CD4-positive, alpha-beta T cell (primary cell): ENCODE measurements at regions of chr14 and their contacts with region 1.

Region 1: GRCh38 chr14:75293920-75294642 is 15.5 kb downstream of the FOS start:
- DNase-seq: peak; percentile 88 to 98 (median 94)
- ATAC-seq: peak; percentile 84
- H3K4me3 ChIP-seq: peak overlapping the region; percentile 65
- H3K4me3 Mint-ChIP-seq: peak overlapping the region; percentile 94
- H3K27ac ChIP-seq: peak overlapping the region; percentile 80 to 95
- H3K27ac Mint-ChIP-seq: peak overlapping the region; percentile 85
- H3K4me1 ChIP-seq: peaks cover 32% of the 10 kb centered on the region
- H3K4me1 Mint-ChIP-seq: peaks cover 21% of the 10 kb centered on the region
- H3K27me3 ChIP-seq: no peaks in the 10 kb centered on the region
- H3K27me3 Mint-ChIP-seq: peaks cover 4% of the 10 kb centered on the region
- CTCF ChIP-seq: no peak

Region 2: GRCh38 chr14:74249433-74250375 is 1044.4 kb before region 1 on chr14:
- CTCF ChIA-PET with region 1: no interaction called
- POLR2A ChIA-PET with region 1: no interaction called
- intact Hi-C with region 1: no loop called
- DNase-seq: no peak
- ATAC-seq: no peak
- H3K4me3 ChIP-seq: no peak overlapping the region
- H3K4me3 Mint-ChIP-seq: no peak overlapping the region
- H3K27ac ChIP-seq: no peak overlapping the region
- H3K27ac Mint-ChIP-seq: no peak overlapping the region
- H3K4me1 ChIP-seq: peaks cover 9% of the 10 kb centered on the region
- H3K4me1 Mint-ChIP-seq: peaks cover 9% of the 10 kb centered on the region
- H3K27me3 ChIP-seq: peaks cover 26 to 39% of the 10 kb centered on the region in 2 experiments
- H3K27me3 Mint-ChIP-seq: peaks cover 57% of the 10 kb centered on the region
- CTCF ChIP-seq: no peak

Region 3: DNA sequence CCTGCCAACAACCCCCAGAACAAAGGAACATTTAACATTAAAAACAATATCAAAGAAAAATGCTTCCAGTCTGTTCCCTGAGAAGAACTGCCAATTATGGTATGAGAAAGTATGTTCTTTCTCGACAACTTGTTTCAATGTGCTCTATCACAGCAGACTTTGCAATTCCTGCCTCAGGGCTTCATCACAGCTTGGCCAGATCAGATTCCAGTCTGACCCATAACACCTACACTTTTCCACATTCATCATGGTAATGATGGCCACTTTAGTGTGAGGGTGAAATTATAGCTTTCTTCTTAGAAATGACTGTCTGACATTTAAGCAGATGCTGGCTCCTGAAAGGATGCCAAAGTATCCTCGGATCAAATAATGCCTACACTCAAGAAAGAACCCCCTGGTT is 184.2 kb before region 1 on chr14:
- CTCF ChIA-PET with region 1: no interaction called
- POLR2A ChIA-PET with region 1: no interaction called
- intact Hi-C with region 1: no loop called
- DNase-seq: no peak
- ATAC-seq: no peak
- H3K4me3 ChIP-seq: no peak overlapping the region
- H3K4me3 Mint-ChIP-seq: no peak overlapping the region
- H3K27ac ChIP-seq: no peak overlapping the region
- H3K27ac Mint-ChIP-seq: peak overlapping the region; percentile 7
- H3K4me1 ChIP-seq: peaks cover 3% of the 10 kb centered on the region
- H3K4me1 Mint-ChIP-seq: peaks cover 11% of the 10 kb centered on the region
- H3K27me3 ChIP-seq: no peaks in the 10 kb centered on the region
- H3K27me3 Mint-ChIP-seq: no peaks in the 10 kb centered on the region
- CTCF ChIP-seq: no peak

Region 4: GRCh38 chr14:75141967-75142366 is 152.1 kb before region 1 on chr14:
- CTCF ChIA-PET with region 1: interaction called, 9 read pairs
- POLR2A ChIA-PET with region 1: interaction called, 5 read pairs
- intact Hi-C with region 1: loop called in 1 of 2 experiments (anchors 1 kb)
- DNase-seq: peak in 7 of 14 experiments; percentile 8 to 73 (median 47)
- ATAC-seq: peak; percentile 69
- H3K4me3 ChIP-seq: no peak overlapping the region
- H3K4me3 Mint-ChIP-seq: no peak overlapping the region
- H3K27ac ChIP-seq: no peak overlapping the region
- H3K27ac Mint-ChIP-seq: peak overlapping the region; percentile 63
- H3K4me1 ChIP-seq: peaks cover 25% of the 10 kb centered on the region
- H3K4me1 Mint-ChIP-seq: peaks cover 74% of the 10 kb centered on the region
- H3K27me3 ChIP-seq: no peaks in the 10 kb centered on the region
- H3K27me3 Mint-ChIP-seq: no peaks in the 10 kb centered on the region
- CTCF ChIP-seq: peak; percentile 51

Region 5: DNA sequence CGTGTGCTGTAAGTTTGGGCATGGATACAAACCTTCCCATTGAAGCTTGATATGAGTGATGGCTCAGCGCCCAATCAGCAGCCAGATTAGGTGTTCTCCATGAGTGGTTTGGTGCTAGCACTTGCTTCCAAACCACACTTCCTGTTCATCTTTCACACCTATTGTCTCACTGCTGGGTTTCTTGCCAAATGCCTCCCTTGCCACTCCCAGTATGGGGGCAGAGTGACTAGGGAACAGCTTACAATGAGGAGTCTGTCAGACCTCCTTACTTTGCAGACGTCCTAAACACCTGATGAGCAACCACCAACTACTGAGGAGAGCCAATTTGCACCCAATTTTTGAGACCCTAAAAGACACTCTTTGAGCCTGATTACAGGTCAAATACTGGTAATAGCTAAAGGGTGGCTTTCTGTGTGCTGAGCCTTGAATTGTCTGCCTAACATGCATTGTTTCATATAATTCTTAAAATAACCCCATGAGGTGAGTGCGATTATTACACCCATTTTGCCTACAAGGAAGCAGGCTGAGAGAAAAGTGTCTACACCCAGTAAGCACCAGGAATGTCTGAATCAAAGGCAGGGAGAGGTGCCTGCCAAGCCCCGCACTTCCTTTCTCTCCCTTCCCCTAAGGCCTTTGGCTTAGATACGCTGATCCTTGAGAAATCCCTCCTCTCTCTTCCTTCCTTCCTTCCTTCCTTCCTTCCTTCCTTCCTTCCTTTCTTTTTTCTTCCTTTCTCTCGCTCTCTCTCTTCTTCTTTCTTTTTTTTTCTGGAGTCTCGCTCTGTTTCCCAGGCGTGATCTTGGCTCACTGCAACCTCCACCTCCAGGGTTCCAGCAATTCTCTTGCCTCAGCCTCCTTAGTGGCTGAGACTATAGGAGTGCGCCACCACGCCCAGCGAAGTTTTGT is 63.7 kb before region 1 on chr14:
- CTCF ChIA-PET with region 1: interaction called, 32 read pairs
- POLR2A ChIA-PET with region 1: interaction called, 21 read pairs
- intact Hi-C with region 1: loop called (anchors 1 kb)
- DNase-seq: peak; percentile 19 to 89 (median 38)
- ATAC-seq: peak; percentile 62
- H3K4me3 ChIP-seq: no peak overlapping the region
- H3K4me3 Mint-ChIP-seq: peak overlapping the region; percentile 46
- H3K27ac ChIP-seq: peak overlapping the region in 1 of 2 donors; percentile 55
- H3K27ac Mint-ChIP-seq: peak overlapping the region; percentile 75
- H3K4me1 ChIP-seq: peaks cover 58% of the 10 kb centered on the region
- H3K4me1 Mint-ChIP-seq: peaks cover 71% of the 10 kb centered on the region
- H3K27me3 ChIP-seq: no peaks in the 10 kb centered on the region
- H3K27me3 Mint-ChIP-seq: no peaks in the 10 kb centered on the region
- CTCF ChIP-seq: peak; percentile 20

Region 6: DNA sequence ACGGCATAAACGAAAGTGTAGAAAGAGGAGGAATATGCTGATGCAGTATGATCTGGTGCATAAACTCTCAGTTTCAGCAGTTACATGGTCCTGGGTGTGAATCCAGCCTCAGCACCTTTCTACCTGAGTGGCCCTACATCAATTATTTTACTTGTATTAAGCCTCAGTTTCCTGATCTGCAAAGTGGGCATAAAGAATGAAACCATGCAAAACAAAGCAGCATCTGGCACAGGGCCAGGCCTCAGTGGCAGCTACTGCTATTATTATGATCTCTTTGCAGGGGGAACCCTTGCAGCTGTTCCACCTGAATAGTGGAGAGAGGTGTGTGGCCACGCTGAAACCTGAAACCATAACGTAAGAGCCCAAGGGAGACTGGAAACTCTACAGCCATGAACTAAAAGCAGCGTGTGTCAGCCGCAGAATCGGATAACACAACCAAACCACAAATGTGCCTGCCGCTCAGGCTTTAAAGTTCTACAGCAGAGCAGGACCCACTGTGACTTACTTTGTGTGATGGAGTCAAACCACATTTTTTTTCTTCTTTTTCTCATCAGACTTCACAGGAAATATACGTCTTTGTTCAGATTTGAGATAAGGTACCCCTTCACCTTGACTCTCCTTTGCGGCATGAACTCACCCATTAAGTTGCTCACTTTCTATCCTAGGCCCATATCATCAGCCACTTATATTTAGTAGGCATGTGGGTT is 44.7 kb before region 1 on chr14:
- CTCF ChIA-PET with region 1: interaction called, 6 read pairs
- POLR2A ChIA-PET with region 1: interaction called, 23 read pairs
- intact Hi-C with region 1: loop called in 1 of 2 experiments (anchors 1 kb)
- DNase-seq: peak; percentile 67 to 97 (median 76)
- ATAC-seq: peak; percentile 72
- H3K4me3 ChIP-seq: peak overlapping the region; percentile 19
- H3K4me3 Mint-ChIP-seq: peak overlapping the region; percentile 50
- H3K27ac ChIP-seq: peak overlapping the region; percentile 75 to 78
- H3K27ac Mint-ChIP-seq: peak overlapping the region; percentile 87
- H3K4me1 ChIP-seq: peaks cover 68% of the 10 kb centered on the region
- H3K4me1 Mint-ChIP-seq: peaks cover 75% of the 10 kb centered on the region
- H3K27me3 ChIP-seq: no peaks in the 10 kb centered on the region
- H3K27me3 Mint-ChIP-seq: no peaks in the 10 kb centered on the region
- CTCF ChIP-seq: no peak

Region 7: DNA sequence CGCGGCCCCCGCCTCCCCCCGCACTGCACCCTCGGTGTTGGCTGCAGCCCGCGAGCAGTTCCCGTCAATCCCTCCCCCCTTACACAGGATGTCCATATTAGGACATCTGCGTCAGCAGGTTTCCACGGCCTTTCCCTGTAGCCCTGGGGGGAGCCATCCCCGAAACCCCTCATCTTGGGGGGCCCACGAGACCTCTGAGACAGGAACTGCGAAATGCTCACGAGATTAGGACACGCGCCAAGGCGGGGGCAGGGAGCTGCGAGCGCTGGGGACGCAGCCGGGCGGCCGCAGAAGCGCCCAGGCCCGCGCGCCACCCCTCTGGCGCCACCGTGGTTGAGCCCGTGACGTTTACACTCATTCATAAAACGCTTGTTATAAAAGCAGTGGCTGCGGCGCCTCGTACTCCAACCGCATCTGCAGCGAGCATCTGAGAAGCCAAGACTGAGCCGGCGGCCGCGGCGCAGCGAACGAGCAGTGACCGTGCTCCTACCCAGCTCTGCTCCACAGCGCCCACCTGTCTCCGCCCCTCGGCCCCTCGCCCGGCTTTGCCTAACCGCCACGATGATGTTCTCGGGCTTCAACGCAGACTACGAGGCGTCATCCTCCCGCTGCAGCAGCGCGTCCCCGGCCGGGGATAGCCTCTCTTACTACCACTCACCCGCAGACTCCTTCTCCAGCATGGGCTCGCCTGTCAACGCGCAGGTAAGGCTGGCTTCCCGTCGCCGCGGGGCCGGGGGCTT is 15.5 kb before region 1 on chr14 and contains the start of gene FOS:
- CTCF ChIA-PET with region 1: interaction called, 38 read pairs
- POLR2A ChIA-PET with region 1: interaction called, 10 read pairs
- intact Hi-C with region 1: loop called (anchors 1 kb)
- DNase-seq: peak; percentile 79 to 97 (median 86)
- ATAC-seq: peak; percentile 66
- H3K4me3 ChIP-seq: peak within 1 kb of the TSS; percentile 88
- H3K4me3 Mint-ChIP-seq: peak within 1 kb of the TSS; percentile 94
- H3K27ac ChIP-seq: peak within 1 kb of the TSS; percentile 69 to 82
- H3K27ac Mint-ChIP-seq: peak within 1 kb of the TSS; percentile 92
- H3K4me1 ChIP-seq: peaks cover 71% of the 10 kb centered on the region
- H3K4me1 Mint-ChIP-seq: peaks cover 56% of the 10 kb centered on the region
- H3K27me3 ChIP-seq: peaks cover 4% of the 10 kb centered on the region in 2 experiments
- H3K27me3 Mint-ChIP-seq: peaks cover 73% of the 10 kb centered on the region
- CTCF ChIP-seq: no peak
- total RNA-seq, gene FOS: 1,565 to 1,685 TPM

Region 8: DNA sequence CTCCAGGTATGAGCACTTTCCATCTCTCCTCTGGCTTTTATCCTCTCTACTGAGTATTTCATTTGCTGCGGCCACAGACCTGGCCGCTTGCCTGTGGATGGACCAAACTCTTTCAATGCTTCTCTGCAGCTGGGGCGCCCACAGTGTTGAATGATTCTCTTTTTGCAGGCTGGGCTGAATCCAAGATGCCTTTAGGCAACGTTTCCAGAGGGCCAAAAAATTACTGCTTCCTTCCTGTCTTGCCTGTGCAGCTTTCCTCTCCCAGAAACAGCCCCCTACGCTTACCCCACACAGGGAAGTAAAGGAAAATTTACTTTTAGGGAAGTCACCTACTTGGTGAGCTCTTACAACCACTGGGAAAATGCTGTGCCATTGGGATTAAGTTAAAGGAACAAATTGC is 78.2 kb after region 1 on chr14:
- CTCF ChIA-PET with region 1: no interaction called
- POLR2A ChIA-PET with region 1: no interaction called
- intact Hi-C with region 1: no loop called
- DNase-seq: no peak
- ATAC-seq: no peak
- H3K4me3 ChIP-seq: no peak overlapping the region
- H3K4me3 Mint-ChIP-seq: no peak overlapping the region
- H3K27ac ChIP-seq: no peak overlapping the region
- H3K27ac Mint-ChIP-seq: no peak overlapping the region
- H3K4me1 ChIP-seq: no peaks in the 10 kb centered on the region
- H3K4me1 Mint-ChIP-seq: no peaks in the 10 kb centered on the region
- H3K27me3 ChIP-seq: no peaks in the 10 kb centered on the region
- H3K27me3 Mint-ChIP-seq: peaks cover 10% of the 10 kb centered on the region
- CTCF ChIP-seq: no peak

Region 9: GRCh38 chr14:75383721-75384120 is 89.6 kb after region 1 on chr14:
- CTCF ChIA-PET with region 1: no interaction called
- POLR2A ChIA-PET with region 1: no interaction called
- intact Hi-C with region 1: no loop called
- DNase-seq: peak in 3 of 14 experiments; percentile 11 to 25 (median 24)
- ATAC-seq: no peak
- H3K4me3 ChIP-seq: no peak overlapping the region
- H3K4me3 Mint-ChIP-seq: no peak overlapping the region
- H3K27ac ChIP-seq: no peak overlapping the region
- H3K27ac Mint-ChIP-seq: no peak overlapping the region
- H3K4me1 ChIP-seq: no peaks in the 10 kb centered on the region
- H3K4me1 Mint-ChIP-seq: no peaks in the 10 kb centered on the region
- H3K27me3 ChIP-seq: peaks cover 0 to 13% of the 10 kb centered on the region in 2 experiments
- H3K27me3 Mint-ChIP-seq: peaks cover 21% of the 10 kb centered on the region
- CTCF ChIP-seq: no peak